ENCODE measurements at regions of chr1 and their contacts with region 1.

Region 1: DNA sequence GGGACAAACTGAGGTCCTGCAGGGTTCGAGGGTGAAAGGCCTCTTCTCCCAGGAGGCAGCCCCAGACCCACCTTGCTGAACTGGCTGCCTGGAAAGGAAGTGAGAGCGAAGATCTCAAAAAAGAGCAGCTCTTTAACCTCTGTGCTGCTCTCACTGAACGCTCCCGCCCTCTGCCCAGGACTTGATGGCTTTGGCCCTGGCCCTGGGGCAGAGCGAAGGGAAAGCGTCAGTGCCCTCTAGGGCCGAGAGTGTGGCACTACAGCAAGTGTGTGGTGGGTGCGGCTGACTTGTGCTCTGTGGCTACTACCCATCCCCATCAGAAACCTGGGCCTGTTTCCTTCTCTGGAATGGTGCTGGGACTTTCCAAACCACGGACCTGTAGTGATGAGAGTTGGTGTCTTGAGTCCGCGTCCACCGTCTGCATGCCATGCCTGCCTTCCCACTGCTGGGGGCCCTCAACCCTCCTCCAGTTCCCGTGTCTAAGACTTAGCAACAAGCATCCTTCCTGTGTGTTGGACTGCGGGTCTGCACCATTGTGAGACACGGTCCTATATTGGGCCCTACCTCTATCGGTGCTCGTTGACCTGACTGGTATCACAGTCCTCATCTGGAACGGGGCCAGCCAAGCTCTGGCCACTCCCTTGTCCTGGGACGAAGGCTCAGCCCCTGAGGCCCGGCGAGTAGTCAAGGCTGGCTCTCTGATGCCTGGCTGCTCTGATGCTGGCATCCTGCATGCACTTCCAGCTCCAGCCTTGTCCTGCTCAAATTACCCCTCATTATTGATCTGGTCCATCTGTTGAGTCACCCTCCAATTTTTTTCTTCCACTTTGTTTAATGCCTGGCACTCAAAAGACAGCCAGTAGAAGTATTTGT is 180.3 kb downstream of the DISC1 start:
- DNase-seq: peak; percentile 46
- ATAC-seq: peak; percentile 100
- H3K4me3 ChIP-seq: no peak overlapping the region
- H3K27ac ChIP-seq: no peak overlapping the region
- H3K4me1 ChIP-seq: 0 out of 2 replicates have a peak, but pooled peaks cover 5% of the 10 kb centered on the region
- H3K27me3 ChIP-seq: no peaks in the 10 kb centered on the region
- CTCF ChIP-seq: peak; percentile 84
- EP300 ChIP-seq: no peak
- POLR2A ChIP-seq: no peak
- RAD21 ChIP-seq: peak; percentile 75

Region 2: GRCh38 chr1:231724876-231725724 is 81.8 kb before region 1 on chr1:
- CTCF ChIA-PET with region 1: no interaction called
- POLR2A ChIA-PET with region 1: no interaction called
- in situ Hi-C with region 1: no loop called
- intact Hi-C with region 1: loop called (anchors 2 kb)
- DNase-seq: peak; percentile 57
- ATAC-seq: peak; percentile 92
- H3K4me3 ChIP-seq: no peak overlapping the region
- H3K27ac ChIP-seq: no peak overlapping the region
- H3K4me1 ChIP-seq: 0 out of 2 replicates have a peak, but pooled peaks cover 6% of the 10 kb centered on the region
- H3K27me3 ChIP-seq: no peaks in the 10 kb centered on the region
- CTCF ChIP-seq: peak; percentile 66
- EP300 ChIP-seq: no peak
- POLR2A ChIP-seq: no peak
- RAD21 ChIP-seq: peak; percentile 37; the same call in 1 of the 2 replicates

Region 3: GRCh38 chr1:231757101-231757404 is 49.8 kb before region 1 on chr1:
- CTCF ChIA-PET with region 1: interaction called, 4 read pairs
- POLR2A ChIA-PET with region 1: no interaction called
- in situ Hi-C with region 1: no loop called
- intact Hi-C with region 1: loop called (anchors 1 kb)
- DNase-seq: no peak
- ATAC-seq: peak; percentile 40
- H3K4me3 ChIP-seq: no peak overlapping the region
- H3K27ac ChIP-seq: no peak overlapping the region
- H3K4me1 ChIP-seq: no peaks in the 10 kb centered on the region
- H3K27me3 ChIP-seq: no peaks in the 10 kb centered on the region
- CTCF ChIP-seq: no peak
- EP300 ChIP-seq: no peak
- POLR2A ChIP-seq: no peak
- RAD21 ChIP-seq: no peak

Region 4: GRCh38 chr1:231866392-231867331 is 59.8 kb after region 1 on chr1:
- CTCF ChIA-PET with region 1: no interaction called
- POLR2A ChIA-PET with region 1: no interaction called
- in situ Hi-C with region 1: no loop called
- intact Hi-C with region 1: no loop called
- DNase-seq: peak; percentile 36
- ATAC-seq: peak; percentile 38; the same call in 1 of the 3 replicates
- H3K4me3 ChIP-seq: no peak overlapping the region
- H3K27ac ChIP-seq: no peak overlapping the region
- H3K4me1 ChIP-seq: no peaks in the 10 kb centered on the region
- H3K27me3 ChIP-seq: no peaks in the 10 kb centered on the region; a peak in 1 of 5 replicates
- CTCF ChIP-seq: peak; percentile 81
- EP300 ChIP-seq: no peak
- POLR2A ChIP-seq: no peak
- RAD21 ChIP-seq: peak; percentile 67; the same call in 1 of the 2 replicates

Measured in HepG2 (cell line).